Activated T-helper 1 cell treated with anti-CD3 and anti-CD28 coated beads, Interleukin-12 subunit alpha, Interleukin-12 subunit beta, Interleukin-2, Interleukin-4 antibody, amounts not matched to agents 30 ng/mL and 10 ng/mL and 1 ng/mL, durations not matched to agents 14 hours and 24 hours and 36 hours (primary cell): ENCODE measurements at regions of chr7 and their contacts with region 1.

Region 1: DNA sequence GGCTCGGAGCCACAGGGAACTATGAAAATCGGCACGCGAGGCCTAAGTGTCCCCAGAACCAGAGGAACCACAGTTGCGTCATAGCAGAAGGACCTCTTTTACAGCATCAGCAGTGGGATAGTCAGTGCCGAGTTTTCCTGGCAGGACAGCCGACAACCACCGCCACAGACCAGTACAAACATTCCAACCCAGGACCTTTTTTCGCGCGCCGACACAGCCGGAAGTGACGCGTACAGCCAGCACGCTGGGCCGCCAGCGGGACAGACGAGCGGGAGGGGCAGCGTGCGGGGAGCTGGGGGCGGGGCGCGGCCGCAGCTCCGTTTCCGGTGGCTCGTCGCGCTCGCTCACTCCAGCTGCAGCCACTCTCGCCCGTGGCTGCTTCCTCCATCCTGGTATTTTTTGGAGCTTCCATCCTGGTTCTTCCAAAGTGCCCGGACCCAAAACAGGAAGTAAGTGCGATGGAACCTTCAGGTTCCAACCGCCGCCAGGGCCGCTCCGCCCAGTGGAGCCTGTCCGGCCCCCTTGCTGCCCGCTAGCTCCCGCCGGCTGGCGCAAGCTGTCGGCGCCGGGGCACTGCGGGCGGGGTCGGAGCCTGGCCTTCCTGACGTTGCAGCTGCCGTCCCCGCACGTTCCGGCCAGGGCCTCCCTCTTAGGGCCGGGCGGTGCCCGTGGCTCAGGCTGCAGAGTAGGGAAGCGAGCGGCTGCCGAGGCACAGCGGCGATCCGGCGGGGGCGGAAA is at the start of gene DMTF1:
- DNase-seq: peak; percentile 83
- H3K4me3 Mint-ChIP-seq: peak within 1 kb of the TSS; percentile 95
- H3K27ac Mint-ChIP-seq: peak within 1 kb of the TSS; percentile 99
- H3K4me1 Mint-ChIP-seq: peaks cover 47% of the 10 kb centered on the region
- H3K27me3 Mint-ChIP-seq: no peaks in the 10 kb centered on the region
- total RNA-seq, gene DMTF1: 103 and 116 TPM in 2 replicates

Region 2: GRCh38 chr7:86939197-86939814 is 213.0 kb before region 1 on chr7:
- intact Hi-C with region 1: loop called (anchors 1 kb)
- DNase-seq: peak; percentile 14
- H3K4me3 Mint-ChIP-seq: no peak overlapping the region
- H3K27ac Mint-ChIP-seq: no peak overlapping the region
- H3K4me1 Mint-ChIP-seq: no peaks in the 10 kb centered on the region
- H3K27me3 Mint-ChIP-seq: peaks cover 8% of the 10 kb centered on the region

Region 3: GRCh38 chr7:87164433-87164832 is 12.2 kb after region 1 on chr7:
- intact Hi-C with region 1: loop called (anchors 1 kb)
- DNase-seq: no peak
- H3K4me3 Mint-ChIP-seq: no peak overlapping the region
- H3K27ac Mint-ChIP-seq: no peak overlapping the region
- H3K4me1 Mint-ChIP-seq: peaks cover 25% of the 10 kb centered on the region
- H3K27me3 Mint-ChIP-seq: no peaks in the 10 kb centered on the region

Region 4: DNA sequence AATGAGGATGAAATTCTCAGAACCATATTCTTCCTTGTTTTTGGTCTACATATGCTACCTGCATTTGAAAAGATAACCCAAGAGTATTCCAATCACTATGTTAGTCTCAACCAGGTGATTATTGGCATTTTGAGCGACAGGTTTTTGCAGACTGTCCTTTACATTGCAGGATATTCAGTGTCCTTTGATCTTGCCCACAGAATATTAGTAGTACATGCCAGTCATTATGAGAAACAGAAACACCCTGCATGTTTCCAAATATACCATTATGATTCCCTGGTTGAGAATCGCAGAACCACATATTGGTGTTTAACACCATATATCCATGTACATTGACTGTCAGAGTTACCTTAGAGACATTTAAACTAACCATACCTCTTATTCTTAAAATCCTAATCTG is 36.7 kb after region 1 on chr7:
- intact Hi-C with region 1: loop called (anchors 5 kb)
- DNase-seq: no peak
- H3K4me3 Mint-ChIP-seq: no peak overlapping the region
- H3K27ac Mint-ChIP-seq: no peak overlapping the region
- H3K4me1 Mint-ChIP-seq: peaks cover 29% of the 10 kb centered on the region
- H3K27me3 Mint-ChIP-seq: no peaks in the 10 kb centered on the region

Region 5: GRCh38 chr7:87231256-87231655 is 79.0 kb after region 1 on chr7:
- intact Hi-C with region 1: loop called (anchors 2 kb)
- DNase-seq: no peak
- H3K4me3 Mint-ChIP-seq: no peak overlapping the region
- H3K27ac Mint-ChIP-seq: no peak overlapping the region
- H3K4me1 Mint-ChIP-seq: peaks cover 9% of the 10 kb centered on the region
- H3K27me3 Mint-ChIP-seq: peaks cover 7% of the 10 kb centered on the region

Region 6: GRCh38 chr7:87628780-87629569 is 476.7 kb after region 1 on chr7:
- intact Hi-C with region 1: loop called (anchors 5 kb)
- DNase-seq: no peak
- H3K4me3 Mint-ChIP-seq: peak overlapping the region; percentile 72
- H3K27ac Mint-ChIP-seq: no peak overlapping the region
- H3K4me1 Mint-ChIP-seq: peaks cover 6% of the 10 kb centered on the region
- H3K27me3 Mint-ChIP-seq: peaks cover 29% of the 10 kb centered on the region

Region 7: DNA sequence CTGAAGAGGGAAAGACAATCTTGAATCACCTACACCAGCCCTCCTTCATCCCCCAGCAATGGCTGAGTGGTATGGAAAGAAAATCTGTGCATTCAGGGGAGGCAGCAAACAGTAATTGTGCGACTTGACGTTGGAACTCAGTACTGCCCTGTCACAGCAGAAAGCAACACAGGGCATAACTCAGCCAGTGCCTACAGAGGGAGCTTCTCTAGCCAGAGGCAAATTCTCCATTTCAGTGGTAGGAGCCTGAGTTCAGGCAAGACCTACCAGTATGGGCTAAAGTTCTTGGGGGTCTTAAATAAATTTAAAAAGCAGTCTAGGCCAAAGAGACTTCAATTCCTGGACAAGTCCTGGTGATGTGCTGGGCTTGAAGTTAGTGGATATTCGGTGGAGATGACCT is 577.1 kb after region 1 on chr7:
- intact Hi-C with region 1: no loop called
- DNase-seq: no peak
- H3K4me3 Mint-ChIP-seq: no peak overlapping the region
- H3K27ac Mint-ChIP-seq: no peak overlapping the region
- H3K4me1 Mint-ChIP-seq: no peaks in the 10 kb centered on the region
- H3K27me3 Mint-ChIP-seq: peaks cover under 1% of the 10 kb centered on the region

Region 8: DNA sequence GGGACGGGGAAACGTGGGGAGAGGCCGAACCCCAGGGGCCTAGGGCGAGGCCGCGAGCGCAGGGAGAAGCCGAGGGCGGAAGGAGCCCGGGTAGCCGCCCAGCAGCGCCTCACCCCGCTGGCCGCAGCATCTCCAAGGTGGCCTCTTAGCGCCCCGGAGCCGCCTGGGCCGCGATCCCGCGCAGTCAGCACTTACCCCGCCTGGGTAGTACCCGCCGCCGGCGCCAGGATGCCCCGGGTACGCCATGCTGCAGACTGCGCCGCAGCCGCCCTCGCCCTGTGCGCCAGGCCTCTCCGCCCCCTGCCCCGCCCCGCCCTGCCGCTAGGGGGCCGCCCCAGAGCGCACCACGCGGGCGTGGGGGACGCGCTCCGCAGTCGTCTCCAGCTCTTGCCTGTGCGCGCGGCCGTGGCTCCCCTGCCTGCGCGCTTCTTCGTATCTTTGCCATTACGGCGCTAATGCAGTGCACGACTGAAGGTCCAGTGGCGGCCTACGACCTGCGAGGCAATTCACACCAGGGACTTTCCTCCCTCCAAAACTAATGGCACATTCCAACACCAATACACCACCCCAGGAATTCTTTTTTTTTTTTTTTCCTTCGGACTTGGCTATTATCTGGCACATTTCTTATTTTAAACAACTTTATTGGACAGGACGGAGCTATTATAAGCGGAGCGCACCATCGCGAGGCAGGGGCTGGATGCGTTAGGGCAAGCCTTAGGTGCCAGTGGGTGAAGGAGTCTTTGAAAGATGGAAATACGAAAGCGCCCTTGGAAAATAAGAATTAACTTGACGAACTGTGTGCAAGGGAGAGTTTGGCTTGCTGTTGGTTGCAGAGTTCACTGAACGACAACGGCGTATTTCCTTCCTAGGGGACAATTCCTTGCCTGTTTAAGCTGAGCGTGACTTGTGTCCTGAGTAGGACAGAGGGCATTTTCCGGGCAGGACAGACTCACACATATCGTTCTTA is 1067.8 kb after region 1 on chr7 and contains the start of gene SRI:
- intact Hi-C with region 1: loop called (anchors 5 kb)
- DNase-seq: peak; percentile 87
- H3K4me3 Mint-ChIP-seq: peak within 1 kb of the TSS; percentile 93
- H3K27ac Mint-ChIP-seq: peak within 1 kb of the TSS; percentile 95
- H3K4me1 Mint-ChIP-seq: peaks cover 43% of the 10 kb centered on the region
- H3K27me3 Mint-ChIP-seq: peaks cover 5% of the 10 kb centered on the region
- total RNA-seq, gene SRI: 173 and 185 TPM in 2 replicates